Pancreas (tissue), 10 donors: ENCODE measurements at regions of chr2 and their contacts with region 1.

Region 1: DNA sequence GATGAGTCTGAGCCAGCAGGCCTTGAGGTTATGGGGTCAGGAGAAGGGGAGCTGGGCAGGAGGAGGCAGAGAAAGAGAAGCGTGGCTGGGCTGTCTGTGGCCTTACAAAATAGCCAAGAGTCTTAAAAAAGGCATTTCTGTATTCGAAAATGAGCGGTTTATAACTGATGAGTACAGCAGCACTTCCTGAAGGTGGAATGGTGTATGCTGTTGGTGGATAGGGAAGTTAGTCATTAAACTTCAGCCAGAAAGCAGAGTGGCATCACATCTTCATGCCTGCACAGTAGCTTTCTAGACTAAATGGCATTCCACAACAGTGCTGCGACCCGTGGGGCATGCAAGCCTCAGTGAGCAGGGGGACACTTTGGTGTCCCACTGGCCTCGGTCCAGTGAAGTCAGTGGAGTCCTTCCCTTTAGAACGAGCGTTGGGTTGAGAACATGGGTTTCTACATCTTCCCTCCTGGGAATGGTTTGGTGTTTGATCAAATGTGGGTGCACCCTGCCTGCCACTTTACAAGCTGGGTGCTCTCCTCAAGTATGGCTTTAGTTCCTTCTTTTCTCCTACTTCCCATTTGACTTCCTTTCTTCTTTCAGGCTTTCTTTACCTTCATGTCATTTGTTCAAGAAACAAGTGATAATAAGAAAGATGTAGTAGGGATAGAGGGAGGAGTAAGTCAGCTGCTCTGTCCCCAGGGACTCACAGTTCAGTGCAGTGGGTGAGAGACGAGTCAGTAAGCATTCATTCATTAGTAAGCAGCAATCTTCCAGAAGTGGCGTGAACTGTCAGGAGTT is 96.3 kb downstream of the ARMC9 start:
- DNase-seq: no peak
- ATAC-seq: no peak
- H3K4me3 ChIP-seq: no peak overlapping the region
- H3K27ac ChIP-seq: no peak overlapping the region
- H3K4me1 ChIP-seq: peaks cover 4 to 20% (median 7%) of the 10 kb centered on the region in 3 donors
- H3K27me3 ChIP-seq: no peaks in the 10 kb centered on the region
- CTCF ChIP-seq: no peak

Region 2: DNA sequence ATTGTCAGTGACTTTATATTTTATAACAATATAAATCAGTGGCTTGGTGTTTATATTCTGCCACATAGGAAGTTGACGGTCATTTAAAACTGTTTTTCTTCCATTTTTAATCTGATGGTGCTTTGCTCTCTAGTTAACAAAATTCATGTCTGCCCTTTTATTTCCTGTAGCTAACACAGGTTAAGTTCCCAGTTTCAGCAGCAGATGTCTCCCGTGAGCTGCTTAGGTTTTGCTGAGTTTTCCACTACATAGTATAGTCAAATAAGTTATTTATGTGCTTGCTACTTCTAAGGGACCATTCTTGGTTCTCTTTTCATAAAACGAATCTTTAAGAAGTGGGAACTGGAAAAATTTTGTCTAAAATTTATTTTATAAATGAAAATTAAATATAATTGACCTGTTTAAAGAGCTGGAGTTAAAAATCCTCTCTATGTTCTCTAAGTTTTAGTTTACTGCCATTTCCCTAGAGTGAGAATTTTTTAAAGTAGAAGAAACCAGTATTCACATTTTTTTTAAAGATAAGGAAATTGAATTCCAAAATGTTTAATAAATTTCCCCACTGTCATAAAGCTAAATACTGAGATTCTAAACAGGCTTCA is 190.6 kb before region 1 on chr2:
- intact Hi-C with region 1: no loop called
- DNase-seq: peak in 3 of 6 donors; percentile 21 to 62 (median 26)
- ATAC-seq: peak; percentile 72 to 95 (median 92)
- H3K4me3 ChIP-seq: no peak overlapping the region
- H3K27ac ChIP-seq: no peak overlapping the region
- H3K4me1 ChIP-seq: no peaks in the 10 kb centered on the region
- H3K27me3 ChIP-seq: no peaks in the 10 kb centered on the region
- CTCF ChIP-seq: peak; percentile 12 to 63 (median 56)

Region 3: GRCh38 chr2:231152800-231153557 is 141.8 kb before region 1 on chr2:
- intact Hi-C with region 1: no loop called
- DNase-seq: no peak
- ATAC-seq: no peak
- H3K4me3 ChIP-seq: no peak overlapping the region
- H3K27ac ChIP-seq: no peak overlapping the region
- H3K4me1 ChIP-seq: peaks cover 0 to 3% (median 0%) of the 10 kb centered on the region in 3 donors
- H3K27me3 ChIP-seq: no peaks in the 10 kb centered on the region
- CTCF ChIP-seq: no peak

Region 4: GRCh38 chr2:231411831-231412617 is 117.3 kb after region 1 on chr2:
- intact Hi-C with region 1: loop called in 1 of 3 experiments (anchors 5 kb)
- DNase-seq: peak; percentile 83 to 97 (median 92)
- ATAC-seq: peak; percentile 94 to 98 (median 96)
- H3K4me3 ChIP-seq: peak overlapping the region; percentile 33 to 67 (median 41)
- H3K27ac ChIP-seq: peak overlapping the region; percentile 62 to 94 (median 87)
- H3K4me1 ChIP-seq: peaks cover 0 to 19% (median 9%) of the 10 kb centered on the region in 3 donors
- H3K27me3 ChIP-seq: no peaks in the 10 kb centered on the region
- CTCF ChIP-seq: peak; percentile 81 to 92 (median 86)

Region 5: GRCh38 chr2:231597014-231597611 is 302.3 kb after region 1 on chr2:
- intact Hi-C with region 1: no loop called
- DNase-seq: no peak
- ATAC-seq: peak in 1 of 4 donors; percentile 50
- H3K4me3 ChIP-seq: no peak overlapping the region
- H3K27ac ChIP-seq: no peak overlapping the region
- H3K4me1 ChIP-seq: no peaks in the 10 kb centered on the region
- H3K27me3 ChIP-seq: no peaks in the 10 kb centered on the region
- CTCF ChIP-seq: no peak